Naive thymus-derived CD4-positive, alpha-beta T cell (primary cell): ENCODE measurements at regions of chr9 and their contacts with region 1.

Region 1: DNA sequence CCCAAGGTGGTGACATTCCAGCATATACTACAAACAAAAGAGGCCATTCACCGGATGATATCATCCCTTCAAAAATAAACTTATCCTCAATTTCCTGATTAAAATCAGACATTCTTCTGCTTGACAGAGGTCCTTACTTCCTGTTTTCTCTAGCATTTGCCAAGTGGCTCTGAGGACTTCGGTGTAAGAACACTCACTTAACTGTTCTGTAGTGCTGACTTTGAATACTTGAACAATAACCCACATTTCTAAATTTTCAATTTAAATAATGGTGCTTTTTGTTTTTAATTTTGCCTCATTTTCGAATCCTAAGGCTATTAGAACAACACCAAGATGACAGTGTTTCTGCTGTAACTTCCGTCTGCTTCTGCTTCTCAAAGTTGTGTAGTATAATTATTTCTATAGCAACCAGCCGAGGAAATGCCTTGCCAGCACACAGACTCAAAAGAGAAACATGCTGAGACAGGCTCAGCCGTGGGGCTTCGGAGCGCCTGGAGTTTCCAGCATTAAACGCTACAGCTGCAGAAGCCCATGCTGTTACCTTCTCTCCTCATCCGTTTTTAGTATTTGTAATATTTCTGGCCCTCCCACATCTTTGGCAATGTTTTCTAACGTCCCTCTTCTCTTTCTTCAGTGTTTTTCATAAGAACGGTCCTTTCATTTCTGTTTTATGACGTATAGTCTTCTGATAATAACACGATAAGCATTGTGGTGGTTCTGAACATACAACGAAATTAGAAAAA is 19.5 kb upstream of the ANXA1 start:
- DNase-seq: peak; percentile 51 to 91 (median 85)
- ATAC-seq: peak; percentile 97
- H3K4me3 ChIP-seq: peak overlapping the region; percentile 78
- H3K4me3 Mint-ChIP-seq: peak overlapping the region; percentile 74 to 97 (median 90)
- H3K27ac ChIP-seq: peak overlapping the region; percentile 90
- H3K27ac Mint-ChIP-seq: peak overlapping the region; percentile 93 to 99 (median 95)
- H3K4me1 ChIP-seq: peaks cover 9% of the 10 kb centered on the region in 2 donors
- H3K4me1 Mint-ChIP-seq: peaks cover 20 to 47% (median 37%) of the 10 kb centered on the region in 7 donors
- H3K27me3 ChIP-seq: no peaks in the 10 kb centered on the region
- H3K27me3 Mint-ChIP-seq: no peaks in the 10 kb centered on the region

Region 2: DNA sequence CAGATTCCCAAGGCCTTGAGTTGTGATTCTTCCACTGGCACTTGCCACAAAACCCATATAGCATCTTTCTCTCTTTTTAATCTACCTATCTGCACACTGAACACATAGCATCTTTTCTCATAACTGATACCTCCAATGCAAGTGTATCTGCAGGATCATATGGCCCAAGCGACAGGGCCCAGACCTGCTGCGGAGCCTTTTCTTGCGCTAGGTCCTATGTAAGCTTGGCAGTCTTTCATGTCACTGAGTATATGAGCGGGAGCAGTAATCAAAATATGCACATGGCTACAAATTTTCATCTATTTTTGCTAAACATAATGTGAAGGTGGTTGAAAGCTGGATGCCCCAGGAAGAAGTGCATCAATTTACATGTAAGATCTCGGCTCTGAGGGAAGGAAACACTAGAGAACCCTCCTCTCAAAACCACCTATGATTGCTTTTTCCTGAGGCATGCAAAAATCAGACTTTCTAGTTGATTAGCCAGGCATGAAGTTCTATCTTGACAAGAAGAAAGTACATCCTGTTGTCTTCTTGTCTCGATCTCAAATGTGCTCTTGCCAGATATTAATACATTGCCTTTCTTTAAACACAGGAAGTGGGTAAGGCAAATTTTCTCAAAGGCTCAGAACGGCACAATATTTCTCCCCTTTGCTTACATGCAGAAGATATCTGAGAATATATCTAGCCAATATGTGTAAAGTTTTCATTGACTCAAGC is 1337.0 kb before region 1 on chr9:
- CTCF ChIA-PET with region 1: no interaction called
- POLR2A ChIA-PET with region 1: no interaction called
- intact Hi-C with region 1: loop called in 1 of 2 experiments (anchors 5 kb)
- DNase-seq: peak in 7 of 9 donors; percentile 68 to 90 (median 85)
- ATAC-seq: peak; percentile 92
- H3K4me3 ChIP-seq: peak overlapping the region; percentile 17
- H3K4me3 Mint-ChIP-seq: peak overlapping the region; percentile 26 to 90 (median 76)
- H3K27ac ChIP-seq: peak overlapping the region; percentile 71
- H3K27ac Mint-ChIP-seq: peak overlapping the region; percentile 91 to 99 (median 96)
- H3K4me1 ChIP-seq: peaks cover 36 to 63% of the 10 kb centered on the region in 2 donors
- H3K4me1 Mint-ChIP-seq: peaks cover 44 to 87% (median 76%) of the 10 kb centered on the region in 7 donors
- H3K27me3 ChIP-seq: no peaks in the 10 kb centered on the region
- H3K27me3 Mint-ChIP-seq: no peaks in the 10 kb centered on the region

Region 3: GRCh38 chr9:73104342-73104741 is 27.9 kb before region 1 on chr9:
- CTCF ChIA-PET with region 1: interaction called, 7 read pairs
- POLR2A ChIA-PET with region 1: no interaction called
- intact Hi-C with region 1: loop called (anchors 1 kb)
- DNase-seq: no peak
- ATAC-seq: peak; percentile 37
- H3K4me3 ChIP-seq: no peak overlapping the region
- H3K4me3 Mint-ChIP-seq: no peak overlapping the region
- H3K27ac ChIP-seq: no peak overlapping the region
- H3K27ac Mint-ChIP-seq: no peak overlapping the region
- H3K4me1 ChIP-seq: no peaks in the 10 kb centered on the region
- H3K4me1 Mint-ChIP-seq: peaks cover 0 to 3% (median 0%) of the 10 kb centered on the region in 7 donors
- H3K27me3 ChIP-seq: no peaks in the 10 kb centered on the region
- H3K27me3 Mint-ChIP-seq: peaks cover 0 to 23% (median 0%) of the 10 kb centered on the region in 5 donors

Region 4: GRCh38 chr9:73149371-73150067 is 17.3 kb after region 1 on chr9:
- CTCF ChIA-PET with region 1: interaction called, 5 read pairs
- POLR2A ChIA-PET with region 1: interaction called, 12 read pairs
- intact Hi-C with region 1: loop called (anchors 1 kb)
- DNase-seq: peak in 1 of 9 donors; percentile 57
- ATAC-seq: peak; percentile 49
- H3K4me3 ChIP-seq: peak overlapping the region; percentile 17
- H3K4me3 Mint-ChIP-seq: peak overlapping the region in 9 of 10 donors; percentile 8 to 79 (median 60)
- H3K27ac ChIP-seq: peak overlapping the region; percentile 32
- H3K27ac Mint-ChIP-seq: peak overlapping the region; percentile 71 to 96 (median 78)
- H3K4me1 ChIP-seq: peaks cover 28 to 32% of the 10 kb centered on the region in 2 donors
- H3K4me1 Mint-ChIP-seq: peaks cover 34 to 80% (median 54%) of the 10 kb centered on the region in 7 donors
- H3K27me3 ChIP-seq: no peaks in the 10 kb centered on the region
- H3K27me3 Mint-ChIP-seq: peaks cover 0 to 2% (median 0%) of the 10 kb centered on the region in 5 donors

Region 5: GRCh38 chr9:73162987-73163768 is 31.0 kb after region 1 on chr9:
- CTCF ChIA-PET with region 1: no interaction called
- POLR2A ChIA-PET with region 1: interaction called, 3 read pairs
- intact Hi-C with region 1: loop called in 1 of 2 experiments (anchors 5 kb)
- DNase-seq: no peak
- ATAC-seq: peak; percentile 33
- H3K4me3 ChIP-seq: no peak overlapping the region
- H3K4me3 Mint-ChIP-seq: no peak overlapping the region
- H3K27ac ChIP-seq: no peak overlapping the region
- H3K27ac Mint-ChIP-seq: peak overlapping the region in 8 of 9 donors; percentile 21 to 83 (median 70)
- H3K4me1 ChIP-seq: peaks cover 11 to 15% of the 10 kb centered on the region in 2 donors
- H3K4me1 Mint-ChIP-seq: peaks cover 15 to 67% (median 49%) of the 10 kb centered on the region in 7 donors
- H3K27me3 ChIP-seq: no peaks in the 10 kb centered on the region
- H3K27me3 Mint-ChIP-seq: no peaks in the 10 kb centered on the region